ENCODE measurements at regions of chr12 and their contacts with region 1.

Region 1: GRCh38 chr12:124680863-124681778 is 113.7 kb upstream of the NCOR2 start:
- DNase-seq: peak; percentile 68
- H3K4me3 ChIP-seq: no peak overlapping the region
- CTCF ChIP-seq: peak; percentile 37

Region 2: DNA sequence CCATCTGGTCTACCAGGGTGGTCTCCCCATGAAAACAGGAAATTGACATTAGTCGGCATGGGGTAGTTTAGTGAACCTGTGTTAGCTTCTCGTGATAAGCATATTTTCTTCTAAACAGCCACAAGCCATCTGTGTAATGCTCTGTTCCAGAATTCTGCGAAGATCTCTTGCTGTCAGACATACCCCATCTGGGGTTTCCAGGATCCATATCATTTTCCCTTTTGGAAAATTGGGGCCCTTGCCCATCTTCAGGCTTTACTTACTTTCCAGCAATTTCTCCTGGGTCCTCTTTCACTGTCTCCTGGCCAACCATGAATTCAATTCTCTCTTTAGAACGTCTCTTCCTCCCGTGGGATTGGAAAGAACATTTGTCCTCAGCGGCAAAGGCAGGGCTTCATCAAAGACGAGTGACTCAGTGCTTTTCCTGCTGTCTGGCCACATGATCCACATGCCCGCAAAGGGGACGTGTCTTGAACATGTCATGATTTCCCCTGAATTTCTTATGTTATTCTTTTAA is 92.3 kb before region 1 on chr12:
- in situ Hi-C with region 1: no loop called
- DNase-seq: no peak
- H3K4me3 ChIP-seq: no peak overlapping the region
- CTCF ChIP-seq: no peak

Region 3: DNA sequence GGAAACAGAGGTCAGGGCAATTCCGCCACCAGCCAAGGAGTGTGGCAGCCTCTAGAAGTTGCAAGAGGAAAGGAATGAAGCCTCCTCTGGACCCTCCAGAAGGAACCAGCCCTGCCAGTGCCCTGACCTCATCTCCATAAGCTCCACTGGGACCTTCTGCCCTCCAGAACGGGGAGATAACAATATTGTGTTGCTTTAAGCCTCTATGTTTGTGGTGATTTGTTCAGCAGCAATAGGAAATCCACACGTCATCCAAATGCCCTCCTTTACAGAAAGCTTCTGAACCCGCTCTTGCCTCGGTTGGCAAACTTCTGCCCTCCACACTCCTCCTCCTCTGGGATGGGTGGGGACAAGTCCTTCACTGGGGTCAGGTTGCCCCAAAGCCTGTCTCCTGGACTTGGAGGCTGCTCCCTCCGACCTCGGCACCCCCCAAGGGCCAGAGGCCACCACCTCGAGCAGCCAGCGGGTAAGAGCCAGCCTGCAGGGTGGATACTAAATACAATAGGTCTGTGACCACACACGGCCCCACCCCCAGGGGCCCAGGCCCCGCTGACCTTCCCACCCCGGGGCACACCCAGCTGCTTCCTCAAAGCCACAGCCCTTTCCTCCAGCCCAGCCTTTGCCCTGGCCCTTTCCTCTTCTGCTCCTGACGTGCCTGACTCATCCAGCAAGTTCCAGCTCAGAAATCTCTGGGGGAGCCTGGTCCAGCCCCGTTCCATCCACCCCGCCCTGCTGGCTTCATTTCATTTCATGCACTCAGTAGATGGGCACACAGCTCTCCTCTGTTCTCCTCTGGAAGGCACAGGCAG is 55.0 kb before region 1 on chr12:
- in situ Hi-C with region 1: loop called (anchors 10 kb)
- DNase-seq: peak; percentile 36
- H3K4me3 ChIP-seq: no peak overlapping the region
- CTCF ChIP-seq: no peak

Region 4: DNA sequence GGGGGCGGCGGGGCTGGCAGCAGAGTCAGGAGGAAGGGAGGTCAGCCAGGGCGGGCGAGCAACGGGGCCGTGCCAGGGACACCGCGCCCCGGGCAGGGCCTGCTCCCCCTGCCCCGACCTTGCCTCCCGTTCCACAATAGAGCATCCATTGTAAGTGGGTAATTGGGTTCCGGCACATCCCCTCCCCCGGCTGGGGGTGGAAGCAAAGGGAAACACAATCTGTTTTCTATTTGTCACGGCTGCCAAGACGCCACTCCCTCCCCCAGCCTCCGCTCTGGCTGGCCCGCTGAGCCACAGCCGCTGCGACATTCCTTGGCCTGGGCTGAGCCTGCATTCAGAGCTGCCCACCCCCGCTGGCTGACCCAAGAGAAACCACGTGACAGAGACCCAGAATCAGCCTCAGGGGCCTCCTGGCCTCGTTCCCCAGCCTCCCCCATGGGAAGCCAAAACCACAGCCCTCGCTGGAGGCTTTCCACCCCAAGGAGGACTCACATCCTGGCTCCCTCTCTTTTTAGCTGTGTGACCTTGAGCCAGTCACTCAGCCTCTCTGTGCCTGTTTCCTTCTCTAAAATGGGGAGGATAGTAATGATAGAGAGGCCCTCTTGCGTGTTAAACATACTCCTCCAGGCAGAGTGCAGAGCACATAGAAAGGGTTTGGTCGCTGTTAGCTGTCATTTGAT is 64.9 kb after region 1 on chr12:
- in situ Hi-C with region 1: no loop called
- DNase-seq: peak; percentile 94
- H3K4me3 ChIP-seq: no peak overlapping the region
- CTCF ChIP-seq: no peak

Measured in astrocyte of the cerebellum (primary cell).